Endothelial cell of umbilical vein (primary cell): ENCODE measurements at regions of chr15 and their contacts with region 1.

Region 1: DNA sequence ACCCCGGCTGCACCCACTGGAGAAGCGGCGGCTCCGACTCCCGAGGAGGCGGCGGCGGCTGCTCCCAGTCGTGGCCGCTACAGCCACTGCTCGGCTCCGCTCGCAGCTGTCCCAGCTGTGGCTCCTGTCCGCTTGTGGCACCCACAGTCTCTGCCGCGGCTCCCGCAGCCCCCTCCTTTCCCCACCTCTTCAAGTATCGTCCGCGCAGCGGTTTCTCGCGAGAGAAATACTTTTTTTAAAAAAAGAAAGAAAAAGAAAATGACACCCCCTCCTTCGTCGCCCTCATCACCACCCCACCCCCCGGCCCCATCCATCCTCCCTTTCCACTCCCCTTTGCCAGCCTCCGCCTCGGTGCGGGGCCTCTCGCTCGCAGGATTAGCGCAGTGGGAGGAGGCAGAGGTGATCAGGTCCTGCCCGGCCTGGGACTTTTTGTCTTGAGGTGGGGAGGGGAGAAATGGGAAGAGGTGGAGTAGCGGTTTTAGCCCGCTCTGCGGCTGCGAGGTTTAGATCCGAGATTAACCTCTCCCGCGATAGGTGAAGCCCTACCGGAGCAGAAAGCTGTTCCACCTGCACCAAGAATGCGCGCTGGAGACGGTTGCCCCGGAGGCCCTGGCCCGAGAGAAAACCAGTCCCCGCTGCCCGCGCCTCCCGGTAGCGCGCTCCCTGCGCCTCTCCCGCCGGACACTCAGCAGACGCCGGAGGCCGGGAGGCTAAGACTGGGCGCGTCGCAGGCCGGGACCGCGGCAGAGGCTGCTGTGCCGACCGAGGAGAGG is at the start of gene FBN1:
- DNase-seq: peak; percentile 88
- H3K4me3 ChIP-seq: peak within 1 kb of the TSS; percentile 50 to 92 (median 77)
- H3K27ac ChIP-seq: peak within 1 kb of the TSS; percentile 70
- H3K4me1 ChIP-seq: peaks cover 34% of the 10 kb centered on the region
- H3K27me3 ChIP-seq: no peaks in the 10 kb centered on the region
- CTCF ChIP-seq: no peak
- POLR2A ChIP-seq: peak; percentile 57
- total RNA-seq, gene FBN1: 88.1 and 111 TPM in 2 replicates

Region 2: GRCh38 chr15:48507416-48508065 is 138.2 kb before region 1 on chr15:
- CTCF ChIA-PET with region 1: interaction called, 12 read pairs
- POLR2A ChIA-PET with region 1: no interaction called
- dilution Hi-C with region 1: no loop called
- intact Hi-C with region 1: loop called (anchors 1 kb)
- DNase-seq: peak; percentile 77
- H3K4me3 ChIP-seq: no peak overlapping the region
- H3K27ac ChIP-seq: no peak overlapping the region
- H3K4me1 ChIP-seq: peaks cover 5% of the 10 kb centered on the region
- H3K27me3 ChIP-seq: no peaks in the 10 kb centered on the region
- CTCF ChIP-seq: peak; percentile 65 to 73
- POLR2A ChIP-seq: no peak

Region 3: GRCh38 chr15:48565560-48566482 is 79.9 kb before region 1 on chr15:
- CTCF ChIA-PET with region 1: no interaction called
- POLR2A ChIA-PET with region 1: interaction called, 3 read pairs
- dilution Hi-C with region 1: no loop called
- intact Hi-C with region 1: loop called (anchors 1 kb)
- DNase-seq: peak; percentile 98
- H3K4me3 ChIP-seq: peak overlapping the region in 1 of 3 experiments; percentile 28
- H3K27ac ChIP-seq: peak overlapping the region; percentile 84
- H3K4me1 ChIP-seq: peaks cover 33% of the 10 kb centered on the region
- H3K27me3 ChIP-seq: no peaks in the 10 kb centered on the region
- CTCF ChIP-seq: no peak
- POLR2A ChIP-seq: no peak

Region 4: GRCh38 chr15:48695088-48695826 is 49.5 kb after region 1 on chr15:
- CTCF ChIA-PET with region 1: no interaction called
- POLR2A ChIA-PET with region 1: interaction called, 3 read pairs
- dilution Hi-C with region 1: no loop called
- intact Hi-C with region 1: loop called (anchors 2 kb)
- DNase-seq: peak; percentile 79
- H3K4me3 ChIP-seq: no peak overlapping the region
- H3K27ac ChIP-seq: no peak overlapping the region
- H3K4me1 ChIP-seq: peaks cover 28% of the 10 kb centered on the region
- H3K27me3 ChIP-seq: no peaks in the 10 kb centered on the region
- CTCF ChIP-seq: no peak
- POLR2A ChIP-seq: peak; percentile 31

Region 5: DNA sequence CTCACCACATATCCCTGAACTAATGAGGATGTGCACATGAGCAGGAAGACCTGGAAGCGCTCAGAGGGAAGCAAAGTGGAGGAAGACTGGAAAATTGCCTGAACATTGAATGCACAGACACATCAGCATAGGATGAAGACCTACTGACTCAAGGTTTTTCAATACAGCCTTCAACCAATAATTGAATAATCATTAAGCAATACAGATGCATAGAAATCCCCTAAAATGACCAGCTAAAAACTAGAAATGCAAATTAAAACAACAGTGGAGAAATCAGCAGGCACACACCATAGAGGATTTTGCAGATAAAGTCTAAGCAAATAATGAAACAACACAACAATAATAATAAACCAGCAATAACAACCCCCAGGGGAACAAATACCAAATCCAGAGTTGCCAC is 84.8 kb after region 1 on chr15:
- CTCF ChIA-PET with region 1: no interaction called
- POLR2A ChIA-PET with region 1: no interaction called
- dilution Hi-C with region 1: no loop called
- intact Hi-C with region 1: no loop called
- DNase-seq: no peak
- H3K4me3 ChIP-seq: no peak overlapping the region
- H3K27ac ChIP-seq: no peak overlapping the region
- H3K4me1 ChIP-seq: no peaks in the 10 kb centered on the region
- H3K27me3 ChIP-seq: no peaks in the 10 kb centered on the region
- CTCF ChIP-seq: no peak
- POLR2A ChIP-seq: no peak

Region 6: DNA sequence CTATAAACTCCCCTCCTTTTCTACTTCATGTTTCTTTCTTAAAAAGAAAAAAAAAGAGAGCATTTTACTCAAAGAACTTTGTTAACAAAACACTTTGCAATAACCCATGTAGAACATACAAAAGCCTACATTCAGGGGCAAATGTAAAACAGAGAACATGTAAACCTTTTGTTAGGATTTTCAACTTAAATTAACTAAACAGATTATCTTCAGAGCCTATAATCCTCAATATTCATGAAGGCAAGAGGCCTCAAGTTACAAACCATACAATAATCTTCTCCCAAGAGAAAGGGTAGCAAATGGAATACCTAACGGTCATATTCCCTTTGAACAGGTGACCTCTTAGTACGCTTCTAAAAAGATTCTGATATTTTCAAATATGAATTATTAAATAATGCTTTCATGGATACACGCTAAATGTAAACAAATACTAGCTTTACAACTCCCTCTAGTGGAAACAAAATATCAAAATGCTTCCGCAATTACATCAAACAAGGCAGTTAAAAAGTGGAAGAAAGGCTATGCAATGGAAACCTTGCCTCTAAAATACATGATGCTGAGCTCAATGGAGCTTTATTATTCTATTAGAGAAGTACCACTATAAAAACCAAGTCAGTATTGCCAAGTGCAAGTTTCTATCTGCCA is 155.2 kb after region 1 on chr15:
- CTCF ChIA-PET with region 1: interaction called, 7 read pairs
- POLR2A ChIA-PET with region 1: interaction called, 4 read pairs
- dilution Hi-C with region 1: no loop called
- intact Hi-C with region 1: loop called (anchors 1 kb)
- DNase-seq: peak; percentile 72
- H3K4me3 ChIP-seq: no peak overlapping the region
- H3K27ac ChIP-seq: no peak overlapping the region
- H3K4me1 ChIP-seq: peaks cover 1% of the 10 kb centered on the region
- H3K27me3 ChIP-seq: no peaks in the 10 kb centered on the region
- CTCF ChIP-seq: peak; percentile 24 to 25
- POLR2A ChIP-seq: no peak

Region 7: GRCh38 chr15:48855501-48856440 is 210.0 kb after region 1 on chr15:
- CTCF ChIA-PET with region 1: no interaction called
- POLR2A ChIA-PET with region 1: no interaction called
- dilution Hi-C with region 1: no loop called
- intact Hi-C with region 1: loop called (anchors 2 kb)
- DNase-seq: peak; percentile 61
- H3K4me3 ChIP-seq: no peak overlapping the region
- H3K27ac ChIP-seq: no peak overlapping the region
- H3K4me1 ChIP-seq: no peaks in the 10 kb centered on the region
- H3K27me3 ChIP-seq: no peaks in the 10 kb centered on the region
- CTCF ChIP-seq: peak; percentile 43 to 59
- POLR2A ChIP-seq: no peak